ENCODE measurements at regions of chr14 and their contacts with region 1.

Region 1: DNA sequence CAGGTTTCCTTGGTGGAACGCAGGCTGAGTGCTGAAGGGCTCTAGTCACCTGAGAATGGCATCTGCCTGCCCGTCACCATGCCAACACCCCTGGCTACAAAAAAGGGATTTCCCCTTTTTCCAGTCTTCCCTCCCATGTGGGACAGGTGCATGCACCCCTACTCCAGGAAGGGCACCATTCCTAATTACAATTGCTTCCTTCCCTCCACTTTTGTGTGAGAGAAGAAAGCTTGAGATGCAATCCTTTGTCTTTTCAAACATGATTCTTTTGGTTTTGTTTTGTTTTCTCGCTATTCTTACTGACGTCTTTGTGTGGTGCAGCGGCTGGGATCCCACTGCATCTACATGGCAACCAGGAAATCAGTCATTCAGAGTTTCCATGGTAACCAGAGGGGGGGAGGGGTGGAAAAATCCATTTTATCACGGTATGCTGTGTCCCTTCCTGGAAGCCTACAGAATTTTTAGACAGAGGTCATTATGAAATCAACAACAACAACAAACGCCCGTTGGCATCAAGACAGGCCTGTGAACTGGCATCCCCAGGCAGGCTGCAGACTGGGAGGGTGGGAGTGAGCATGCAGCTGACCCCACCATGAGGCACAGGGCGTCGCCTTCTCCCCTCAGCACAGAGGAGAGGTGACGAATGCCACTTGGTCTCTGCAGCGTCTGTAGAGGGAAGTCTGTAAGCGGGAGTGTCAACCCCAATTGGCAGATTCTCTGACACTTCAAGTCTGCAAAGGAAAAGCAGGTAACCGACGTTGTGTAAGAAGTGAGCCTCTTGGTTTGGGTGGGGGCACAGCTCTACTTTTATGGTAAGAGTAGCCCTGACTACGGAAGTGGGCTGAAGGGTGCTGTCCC is 13.6 kb upstream of the GNG2 start:
- DNase-seq: peak; percentile 93
- H3K4me3 Mint-ChIP-seq: peak overlapping the region; percentile 85
- H3K27ac Mint-ChIP-seq: peak overlapping the region; percentile 100
- H3K4me1 Mint-ChIP-seq: peaks cover 72% of the 10 kb centered on the region
- H3K27me3 Mint-ChIP-seq: no peaks in the 10 kb centered on the region

Region 2: DNA sequence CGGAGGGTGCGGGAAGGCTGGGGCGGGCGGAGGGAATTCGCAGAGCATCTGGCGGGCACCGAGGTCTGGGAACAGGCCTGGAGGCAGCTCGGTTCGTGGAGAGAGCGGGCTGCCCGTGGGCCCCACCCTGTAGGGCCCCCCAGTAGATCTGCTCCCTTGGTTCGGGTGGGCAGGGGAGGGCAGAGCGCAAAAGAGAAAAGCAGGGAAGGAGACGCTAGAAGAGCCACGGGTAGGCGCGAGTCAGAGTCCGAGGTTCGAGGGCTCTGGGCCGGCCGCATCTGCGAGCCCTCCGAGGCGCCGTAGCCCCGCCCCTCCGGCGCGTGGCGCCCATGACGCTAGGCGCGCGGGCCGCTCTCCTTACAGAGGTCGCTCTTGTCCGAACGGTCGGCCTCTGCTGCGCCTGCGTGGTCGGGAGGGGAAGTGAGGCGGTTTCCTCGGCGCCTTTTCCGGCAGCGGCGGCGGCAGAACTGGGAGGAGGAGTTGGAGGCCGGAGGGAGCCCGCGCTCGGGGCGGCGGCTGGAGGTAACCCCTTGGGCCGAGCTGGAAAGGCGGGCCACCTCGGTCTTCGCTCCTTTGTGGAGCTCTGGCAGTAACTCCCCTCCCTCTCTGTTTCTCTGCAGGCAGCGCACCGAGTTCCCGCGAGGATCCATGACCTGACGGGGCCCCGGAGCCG is 1954.1 kb before region 1 on chr14 and contains the start of gene ARF6:
- CTCF ChIA-PET with region 1: no interaction called
- intact Hi-C with region 1: loop called (anchors 5 kb)
- DNase-seq: peak; percentile 98
- H3K4me3 Mint-ChIP-seq: peak within 1 kb of the TSS; percentile 100
- H3K27ac Mint-ChIP-seq: peak within 1 kb of the TSS; percentile 100
- H3K4me1 Mint-ChIP-seq: peaks cover 19% of the 10 kb centered on the region
- H3K27me3 Mint-ChIP-seq: no peaks in the 10 kb centered on the region
- total RNA-seq, gene ARF6: 128 to 129 TPM

Region 3: GRCh38 chr14:50813544-50813863 is 1033.4 kb before region 1 on chr14:
- CTCF ChIA-PET with region 1: no interaction called
- intact Hi-C with region 1: loop called (anchors 1 kb)
- DNase-seq: peak; percentile 45
- H3K4me3 Mint-ChIP-seq: peak overlapping the region; percentile 75
- H3K27ac Mint-ChIP-seq: peak overlapping the region; percentile 98
- H3K4me1 Mint-ChIP-seq: peaks cover 55% of the 10 kb centered on the region
- H3K27me3 Mint-ChIP-seq: no peaks in the 10 kb centered on the region

Region 4: DNA sequence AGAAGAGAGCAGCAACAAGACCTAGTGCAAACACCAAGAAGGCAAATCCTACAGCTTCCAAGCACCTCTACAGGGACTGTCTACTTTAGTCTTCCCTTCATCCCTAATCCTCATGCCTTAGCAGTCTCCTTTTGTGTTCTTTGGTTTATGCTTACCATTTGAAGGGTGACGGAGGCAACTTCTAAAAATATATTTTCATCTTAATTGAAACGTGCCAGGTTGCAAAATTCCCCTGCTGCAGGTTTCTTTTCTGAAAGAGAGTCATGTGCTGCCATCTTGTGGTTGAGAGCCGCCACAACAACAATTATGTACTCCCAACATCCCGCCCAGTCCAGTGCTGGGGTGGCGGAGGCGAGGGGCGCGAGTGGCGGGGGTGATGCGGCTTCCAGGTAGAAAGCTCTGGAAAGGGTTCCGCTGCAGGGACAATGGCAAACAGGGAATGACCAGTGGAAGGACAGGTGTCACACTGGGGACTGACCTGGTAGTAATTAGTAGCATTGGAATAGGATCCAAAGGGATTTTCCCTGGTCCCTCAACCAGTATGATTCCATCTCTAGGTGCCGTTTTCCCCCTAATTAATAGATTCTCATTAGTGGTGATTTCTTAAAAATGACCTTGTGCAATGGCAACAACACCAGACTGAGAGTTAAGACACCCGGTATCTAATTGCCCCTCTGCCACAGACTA is 66.7 kb before region 1 on chr14:
- CTCF ChIA-PET with region 1: no interaction called
- intact Hi-C with region 1: loop called (anchors 5 kb)
- DNase-seq: peak; percentile 88
- H3K4me3 Mint-ChIP-seq: peak overlapping the region; percentile 0
- H3K27ac Mint-ChIP-seq: no peak overlapping the region
- H3K4me1 Mint-ChIP-seq: peaks cover 42% of the 10 kb centered on the region
- H3K27me3 Mint-ChIP-seq: no peaks in the 10 kb centered on the region

Region 5: DNA sequence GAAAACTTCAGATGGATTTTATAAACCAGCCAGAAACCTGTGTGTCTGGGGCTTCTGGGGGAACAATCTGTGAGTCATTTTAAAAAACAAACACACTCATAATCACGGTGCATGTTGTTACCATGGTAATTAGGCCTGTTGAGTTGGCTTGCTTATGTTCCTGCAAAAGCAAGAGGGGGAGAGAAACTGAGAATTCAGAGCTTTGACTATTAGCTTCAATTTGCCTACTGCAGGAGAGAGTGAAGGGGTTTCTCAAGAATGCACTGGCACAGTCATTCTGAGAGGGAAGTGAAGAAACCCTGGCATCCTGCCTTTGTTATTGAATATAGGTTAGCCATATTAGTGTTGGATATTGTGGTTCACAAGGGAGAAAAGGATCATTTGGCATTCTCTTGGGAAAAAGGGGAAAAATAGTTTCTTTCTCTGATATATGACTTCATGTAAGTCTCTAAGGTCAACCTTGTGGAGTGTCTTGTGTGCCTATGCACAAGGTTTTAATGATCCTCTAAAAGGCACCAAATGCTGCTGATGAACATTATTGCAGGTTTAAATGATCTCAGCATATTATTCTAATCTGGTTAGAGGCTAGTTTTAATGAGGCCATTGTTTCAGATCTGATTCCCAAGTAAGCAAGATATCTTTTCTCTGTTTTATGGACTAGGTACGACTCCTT is 26.5 kb after region 1 on chr14:
- CTCF ChIA-PET with region 1: no interaction called
- intact Hi-C with region 1: loop called (anchors 1 kb)
- DNase-seq: peak; percentile 79
- H3K4me3 Mint-ChIP-seq: peak overlapping the region; percentile 34
- H3K27ac Mint-ChIP-seq: peak overlapping the region; percentile 84
- H3K4me1 Mint-ChIP-seq: peaks cover 66% of the 10 kb centered on the region
- H3K27me3 Mint-ChIP-seq: no peaks in the 10 kb centered on the region

Region 6: GRCh38 chr14:51939727-51940390 is 93.0 kb after region 1 on chr14:
- CTCF ChIA-PET with region 1: no interaction called
- intact Hi-C with region 1: no loop called
- DNase-seq: no peak
- H3K4me3 Mint-ChIP-seq: no peak overlapping the region
- H3K27ac Mint-ChIP-seq: no peak overlapping the region
- H3K4me1 Mint-ChIP-seq: peaks cover 40% of the 10 kb centered on the region
- H3K27me3 Mint-ChIP-seq: no peaks in the 10 kb centered on the region

Region 7: DNA sequence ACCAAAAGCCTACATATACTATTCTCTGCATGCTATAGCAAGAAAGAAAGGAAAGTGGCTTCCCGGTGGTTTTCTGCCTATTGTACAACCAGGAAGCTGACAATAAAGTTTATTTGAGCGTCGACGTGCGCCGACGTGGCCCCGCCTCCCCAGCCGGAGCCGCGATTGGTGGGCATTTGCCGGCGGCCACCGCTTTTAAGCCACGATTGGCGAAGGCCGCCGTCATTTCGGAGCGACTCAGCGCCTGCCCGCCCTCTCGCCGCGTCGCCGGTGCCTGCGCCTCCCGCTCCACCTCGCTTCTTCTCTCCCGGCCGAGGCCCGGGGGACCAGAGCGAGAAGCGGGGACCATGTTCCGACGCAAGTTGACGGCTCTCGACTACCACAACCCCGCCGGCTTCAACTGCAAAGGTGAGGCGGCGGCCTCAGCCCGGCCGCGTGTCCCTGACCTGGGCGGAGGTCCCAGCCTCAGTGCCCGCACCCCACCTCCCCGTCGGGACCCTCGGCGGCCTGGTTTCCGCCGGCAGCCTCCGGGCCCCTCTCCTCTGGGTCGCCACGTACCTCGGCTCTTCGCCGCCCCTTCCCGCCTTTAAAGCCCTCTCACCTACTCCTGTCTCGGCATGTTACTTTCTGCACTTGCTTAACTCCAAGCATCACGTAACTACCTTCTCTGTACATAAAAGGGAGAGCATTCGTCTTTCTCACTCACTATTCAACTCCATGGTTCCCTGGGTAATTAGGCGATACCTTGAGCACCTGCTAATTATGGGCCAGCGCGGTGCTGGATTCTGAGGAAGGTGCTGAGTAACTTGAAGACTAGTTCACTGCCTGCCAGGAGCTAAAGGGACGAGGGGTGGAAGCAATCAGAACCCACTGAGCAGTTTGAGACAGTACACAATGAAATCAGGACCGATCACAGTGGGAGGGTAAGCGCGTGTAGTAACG is 142.7 kb after region 1 on chr14 and contains the start of gene RTRAF:
- CTCF ChIA-PET with region 1: no interaction called
- intact Hi-C with region 1: loop called (anchors 1 kb)
- DNase-seq: peak; percentile 93
- H3K4me3 Mint-ChIP-seq: peak within 1 kb of the TSS; percentile 89
- H3K27ac Mint-ChIP-seq: peak within 1 kb of the TSS; percentile 85
- H3K4me1 Mint-ChIP-seq: peaks cover 37% of the 10 kb centered on the region
- H3K27me3 Mint-ChIP-seq: no peaks in the 10 kb centered on the region
- total RNA-seq, gene RTRAF: 255 to 275 TPM

Region 8: GRCh38 chr14:53209370-53209769 is 1362.5 kb after region 1 on chr14:
- CTCF ChIA-PET with region 1: no interaction called
- intact Hi-C with region 1: no loop called
- DNase-seq: no peak
- H3K4me3 Mint-ChIP-seq: no peak overlapping the region
- H3K27ac Mint-ChIP-seq: no peak overlapping the region
- H3K4me1 Mint-ChIP-seq: no peaks in the 10 kb centered on the region
- H3K27me3 Mint-ChIP-seq: no peaks in the 10 kb centered on the region

Measured in activated naive CD4-positive, alpha-beta T cell treated with anti-CD3 and anti-CD28 coated beads for 36 hours (primary cell).